K562 (cell line): ENCODE measurements at regions of chr3 and their contacts with region 1.

Region 1: GRCh38 chr3:180601688-180602666 is at the start of gene TTC14:
- DNase-seq: peak; percentile 90 to 96 (median 92)
- ATAC-seq: peak; percentile 99
- H3K4me3 ChIP-seq: peak within 1 kb of the TSS; percentile 97
- H3K27ac ChIP-seq: peak within 1 kb of the TSS; percentile 87
- H3K4me1 ChIP-seq: no peaks in the 10 kb centered on the region; a peak in 1 of 5 replicates
- H3K27me3 ChIP-seq: no peaks in the 10 kb centered on the region
- CTCF ChIP-seq: 0 out of 6 replicates have a peak, but pooled peaks of 1 of the 3 experiments have one; percentile 13
- EP300 ChIP-seq: no peak
- POLR2A ChIP-seq: peak; percentile 88
- RAD21 ChIP-seq: no peak
- polyA plus RNA-seq, gene TTC14: 10.0 to 11.3 TPM

Region 2: GRCh38 chr3:179446501-179446900 is 1155.5 kb before region 1 on chr3:
- CTCF ChIA-PET with region 1: no interaction called
- POLR2A ChIA-PET with region 1: no interaction called
- in situ Hi-C with region 1: loop called (anchors 25 kb)
- intact Hi-C with region 1: no loop called
- DNase-seq: peak in 1 of 4 experiments; percentile 36
- ATAC-seq: no peak
- H3K4me3 ChIP-seq: no peak overlapping the region
- H3K27ac ChIP-seq: no peak overlapping the region
- H3K4me1 ChIP-seq: peaks cover 8 to 12% of the 10 kb centered on the region in 2 experiments; a peak in 4 of 5 replicates
- H3K27me3 ChIP-seq: no peaks in the 10 kb centered on the region
- CTCF ChIP-seq: peak; percentile 23 to 36 (median 28); a peak in 3 of 6 replicates
- EP300 ChIP-seq: no peak
- POLR2A ChIP-seq: no peak
- RAD21 ChIP-seq: peak; percentile 41 to 54

Region 3: GRCh38 chr3:179653096-179653797 is 948.7 kb before region 1 on chr3:
- CTCF ChIA-PET with region 1: no interaction called
- POLR2A ChIA-PET with region 1: no interaction called
- in situ Hi-C with region 1: no loop called
- intact Hi-C with region 1: loop called (anchors 5 kb)
- DNase-seq: peak; percentile 31 to 64 (median 44)
- ATAC-seq: peak; percentile 86
- H3K4me3 ChIP-seq: peak overlapping the region; percentile 55
- H3K27ac ChIP-seq: no peak overlapping the region
- H3K4me1 ChIP-seq: peaks cover 0 to 18% of the 10 kb centered on the region in 2 experiments; a peak in 3 of 5 replicates
- H3K27me3 ChIP-seq: peaks cover 6 to 10% of the 10 kb centered on the region in 2 experiments; a peak in 3 of 5 replicates
- CTCF ChIP-seq: peak in 1 of 3 experiments; percentile 21; a peak in 1 of 6 replicates
- EP300 ChIP-seq: no peak
- POLR2A ChIP-seq: no peak
- RAD21 ChIP-seq: peak in 1 of 2 experiments; percentile 35; a peak in 2 of 4 replicates

Region 4: GRCh38 chr3:179811321-179812095 is 790.5 kb before region 1 on chr3:
- CTCF ChIA-PET with region 1: no interaction called
- POLR2A ChIA-PET with region 1: no interaction called
- in situ Hi-C with region 1: no loop called
- intact Hi-C with region 1: loop called (anchors 5 kb)
- DNase-seq: peak; percentile 18 to 54 (median 32)
- ATAC-seq: peak; percentile 90
- H3K4me3 ChIP-seq: no peak overlapping the region
- H3K27ac ChIP-seq: no peak overlapping the region
- H3K4me1 ChIP-seq: no peaks in the 10 kb centered on the region
- H3K27me3 ChIP-seq: peaks cover 2 to 4% of the 10 kb centered on the region in 2 experiments; a peak in 1 of 5 replicates
- CTCF ChIP-seq: peak; percentile 46 to 69 (median 68)
- EP300 ChIP-seq: no peak
- POLR2A ChIP-seq: no peak
- RAD21 ChIP-seq: peak; percentile 53 to 77

Region 5: DNA sequence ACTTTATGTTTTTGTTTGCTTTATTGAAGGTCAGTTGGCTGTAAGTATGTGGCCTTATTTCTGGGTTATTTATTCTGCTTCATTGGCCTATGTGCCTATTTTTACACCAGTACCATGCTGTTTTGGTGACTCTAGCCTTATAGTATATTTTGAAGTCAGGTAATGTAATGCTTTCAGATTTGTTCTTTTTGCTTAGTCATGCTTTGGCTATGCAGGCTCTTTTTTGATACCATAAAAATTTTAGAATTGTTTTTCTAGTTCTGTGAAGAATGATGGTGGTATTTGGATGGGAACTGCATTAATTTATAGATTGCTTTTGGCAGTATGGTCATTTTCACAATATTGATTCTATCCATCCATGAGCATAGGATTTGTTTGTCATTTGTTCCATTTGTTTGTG is 63.5 kb before region 1 on chr3:
- CTCF ChIA-PET with region 1: no interaction called
- POLR2A ChIA-PET with region 1: no interaction called
- in situ Hi-C with region 1: no loop called
- intact Hi-C with region 1: no loop called
- DNase-seq: no peak
- ATAC-seq: no peak
- H3K4me3 ChIP-seq: no peak overlapping the region
- H3K27ac ChIP-seq: no peak overlapping the region
- H3K4me1 ChIP-seq: no peaks in the 10 kb centered on the region
- H3K27me3 ChIP-seq: no peaks in the 10 kb centered on the region
- CTCF ChIP-seq: no peak
- EP300 ChIP-seq: no peak
- POLR2A ChIP-seq: no peak
- RAD21 ChIP-seq: no peak